Esophagus muscularis mucosa (tissue), 4 donors: ENCODE measurements at regions of chr7 and their contacts with region 1.

Region 1: GRCh38 chr7:42107484-42108245 is 129.3 kb downstream of the GLI3 start:
- DNase-seq: no peak
- H3K4me3 ChIP-seq: no peak overlapping the region
- H3K27ac ChIP-seq: peak overlapping the region; percentile 38 to 72 (median 64)
- H3K4me1 ChIP-seq: peaks cover 42 to 81% (median 70%) of the 10 kb centered on the region in 4 donors
- H3K27me3 ChIP-seq: no peaks in the 10 kb centered on the region
- CTCF ChIP-seq: no peak
- EP300 ChIP-seq: no peak
- POLR2A ChIP-seq: no peak

Region 2: GRCh38 chr7:42219447-42219846 is 111.8 kb after region 1 on chr7:
- intact Hi-C with region 1: loop called (anchors 10 kb)
- DNase-seq: no peak
- H3K4me3 ChIP-seq: no peak overlapping the region
- H3K27ac ChIP-seq: no peak overlapping the region
- H3K4me1 ChIP-seq: peaks cover 0 to 18% (median 15%) of the 10 kb centered on the region in 4 donors
- H3K27me3 ChIP-seq: no peaks in the 10 kb centered on the region
- CTCF ChIP-seq: no peak
- EP300 ChIP-seq: no peak
- POLR2A ChIP-seq: no peak